ENCODE measurements at regions of chrX and their contacts with region 1.

Region 1: DNA sequence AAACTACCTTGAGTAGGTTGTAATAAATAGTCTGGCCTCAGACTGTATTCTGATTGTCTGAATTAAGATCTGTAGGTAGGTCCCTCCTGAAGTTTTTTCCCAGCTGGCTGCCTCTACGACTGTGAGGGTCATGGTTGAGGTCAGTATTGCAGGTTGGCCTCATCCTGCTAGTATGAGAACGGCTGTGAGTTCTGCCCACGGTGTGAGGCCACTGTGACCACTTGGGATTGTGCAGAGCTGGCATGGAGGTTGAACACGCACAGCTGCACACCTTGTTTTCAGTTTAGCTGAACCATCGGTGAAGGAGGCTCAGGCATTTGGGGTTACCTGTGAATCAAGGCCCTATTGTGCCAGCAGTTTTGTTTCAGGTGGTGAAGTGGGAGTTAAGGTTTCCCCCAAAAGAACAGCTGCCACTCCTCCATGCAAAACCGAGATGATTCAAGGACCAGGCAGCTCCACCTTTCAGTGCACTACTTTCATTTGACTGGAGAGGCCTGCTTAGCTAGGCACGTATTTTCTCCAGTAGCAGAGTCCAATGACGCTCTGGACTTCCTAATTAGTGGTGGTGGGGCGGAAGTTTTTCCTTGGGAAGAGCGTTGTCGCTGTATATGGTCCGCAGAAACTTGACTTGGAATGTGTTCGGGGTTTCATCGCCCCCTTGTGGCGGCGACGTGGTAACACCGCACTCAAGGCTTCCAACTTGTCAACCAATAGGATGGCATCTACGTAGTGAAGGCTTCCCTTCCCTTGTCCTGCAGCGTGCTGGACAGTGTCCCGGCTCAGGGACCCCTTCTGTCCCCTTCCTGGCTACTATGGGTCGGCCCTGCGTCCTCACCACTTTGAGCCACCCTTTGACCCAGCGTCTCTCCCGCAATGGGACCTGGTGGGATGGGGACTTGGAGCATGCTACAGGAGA is 13.8 kb downstream of the CMC4 start:
- DNase-seq: peak; percentile 50 to 61
- ATAC-seq: peak; percentile 85 to 97 (median 94)
- H3K4me3 ChIP-seq: peak overlapping the region in 3 of 10 donors; percentile 13 to 28 (median 27)
- H3K27ac ChIP-seq: peak overlapping the region in 7 of 10 donors; percentile 19 to 58 (median 41)
- H3K4me1 ChIP-seq: peaks cover 0 to 13% (median 6%) of the 10 kb centered on the region in 9 donors
- H3K27me3 ChIP-seq: no peaks in the 10 kb centered on the region
- CTCF ChIP-seq: peak; percentile 47 to 82 (median 77)

Region 2: DNA sequence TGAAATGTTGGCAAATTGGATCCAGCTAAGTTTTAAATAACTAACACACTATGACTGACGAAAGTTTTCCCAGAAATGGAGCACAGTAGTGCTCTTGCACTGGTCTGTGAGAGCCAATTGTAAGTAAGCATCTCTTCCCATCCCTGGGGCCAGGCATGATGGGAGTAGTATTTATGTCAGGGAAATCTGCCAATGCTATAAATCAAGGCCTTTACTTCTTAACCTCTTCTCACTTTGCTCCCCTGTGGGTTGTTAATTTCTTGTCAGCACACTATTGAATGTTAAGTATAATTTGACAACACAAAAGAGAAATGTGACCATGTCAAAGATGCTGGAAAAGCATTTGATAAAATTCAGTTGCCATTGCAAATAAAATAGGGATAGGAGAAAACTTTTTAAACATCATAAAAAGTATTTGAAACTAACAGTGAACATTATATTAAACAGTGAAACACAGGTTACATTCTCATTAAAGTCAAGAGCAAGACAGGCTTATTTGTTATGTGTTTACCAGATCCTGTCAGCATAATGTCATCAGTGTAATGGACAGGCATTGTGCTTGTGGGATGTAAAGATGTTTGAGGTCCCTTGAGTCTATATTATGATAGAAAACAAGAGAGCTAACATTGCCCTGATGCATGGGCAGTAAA is 166.0 kb before region 1 on chrX:
- intact Hi-C with region 1: loop called in 1 of 10 experiments (anchors 10 kb)
- DNase-seq: no peak
- ATAC-seq: no peak
- H3K4me3 ChIP-seq: no peak overlapping the region
- H3K27ac ChIP-seq: no peak overlapping the region
- H3K4me1 ChIP-seq: no peaks in the 10 kb centered on the region
- H3K27me3 ChIP-seq: no peaks in the 10 kb centered on the region
- CTCF ChIP-seq: no peak

Region 3: GRCh38 chrX:154980330-154981096 is 76.6 kb before region 1 on chrX:
- intact Hi-C with region 1: loop called in 8 of 10 experiments (anchors 1 to 10 kb)
- DNase-seq: peak; percentile 44 to 74
- ATAC-seq: peak; percentile 87 to 94 (median 90)
- H3K4me3 ChIP-seq: peak overlapping the region in 7 of 10 donors; percentile 21 to 50 (median 43)
- H3K27ac ChIP-seq: peak overlapping the region in 4 of 10 donors; percentile 5 to 66 (median 40)
- H3K4me1 ChIP-seq: peaks cover 0 to 8% (median 0%) of the 10 kb centered on the region in 9 donors
- H3K27me3 ChIP-seq: no peaks in the 10 kb centered on the region
- CTCF ChIP-seq: peak; percentile 32 to 75 (median 69)

Region 4: GRCh38 chrX:154990496-154990895 is 66.6 kb before region 1 on chrX:
- intact Hi-C with region 1: loop called in 3 of 10 experiments (anchors 10 kb)
- DNase-seq: no peak
- ATAC-seq: no peak
- H3K4me3 ChIP-seq: no peak overlapping the region
- H3K27ac ChIP-seq: no peak overlapping the region
- H3K4me1 ChIP-seq: peaks cover 0 to 8% (median 0%) of the 10 kb centered on the region in 9 donors
- H3K27me3 ChIP-seq: no peaks in the 10 kb centered on the region
- CTCF ChIP-seq: no peak

Measured in heart right ventricle (tissue), 16 donors.